GM12878 (cell line): ENCODE measurements at regions of chr2 and their contacts with region 1.

Region 1: GRCh38 chr2:171407030-171407675 is 26.6 kb downstream of the METTL8 start:
- DNase-seq: peak; percentile 71
- ATAC-seq: peak; percentile 75
- H3K4me3 ChIP-seq: 0 out of 2 replicates have a peak overlapping the region, but pooled peaks have one; percentile 14
- H3K27ac ChIP-seq: peak overlapping the region; percentile 93
- H3K4me1 ChIP-seq: peaks cover 64% of the 10 kb centered on the region
- H3K27me3 ChIP-seq: no peaks in the 10 kb centered on the region
- CTCF ChIP-seq: no peak
- EP300 ChIP-seq: peak; percentile 54 to 94; a peak in 3 of 4 replicates
- POLR2A ChIP-seq: no peak
- RAD21 ChIP-seq: 0 out of 2 replicates have a peak, but pooled peaks have one; percentile 14

Region 2: DNA sequence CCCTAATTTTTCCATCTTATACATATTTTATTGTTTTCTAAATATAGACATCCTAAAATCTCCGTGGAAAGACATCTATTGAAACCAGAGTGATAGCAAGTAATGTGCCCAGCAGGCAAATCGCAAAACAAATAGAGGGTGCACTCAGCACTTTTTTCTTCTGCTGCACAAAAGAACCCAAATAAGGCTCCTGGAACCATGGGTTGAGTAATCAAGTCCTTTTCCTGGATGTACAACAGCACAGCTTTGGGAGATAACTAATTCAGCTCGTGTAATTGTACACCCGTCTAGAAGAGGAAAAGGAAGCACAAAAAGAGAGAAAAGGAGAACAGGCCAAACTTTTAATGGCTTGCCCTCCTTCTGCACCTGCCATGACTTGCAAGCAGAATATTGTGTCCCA is 119.5 kb before region 1 on chr2:
- CTCF ChIA-PET with region 1: no interaction called
- POLR2A ChIA-PET with region 1: no interaction called
- RAD21 ChIA-PET with region 1: no interaction called
- SMC1A ChIA-PET with region 1: no interaction called
- in situ Hi-C with region 1: no loop called
- intact Hi-C with region 1: no loop called
- DNase-seq: no peak
- ATAC-seq: no peak
- H3K4me3 ChIP-seq: no peak overlapping the region
- H3K27ac ChIP-seq: no peak overlapping the region
- H3K4me1 ChIP-seq: no peaks in the 10 kb centered on the region
- H3K27me3 ChIP-seq: no peaks in the 10 kb centered on the region
- CTCF ChIP-seq: no peak
- EP300 ChIP-seq: no peak
- POLR2A ChIP-seq: no peak
- RAD21 ChIP-seq: no peak

Region 3: GRCh38 chr2:171325886-171326585 is 81.1 kb before region 1 on chr2:
- CTCF ChIA-PET with region 1: interaction called, 29 read pairs
- POLR2A ChIA-PET with region 1: interaction called, 168 read pairs
- RAD21 ChIA-PET with region 1: interaction called, 208 read pairs
- SMC1A ChIA-PET with region 1: interaction called, 273 read pairs
- in situ Hi-C with region 1: no loop called
- intact Hi-C with region 1: no loop called
- DNase-seq: no peak
- ATAC-seq: peak; percentile 71
- H3K4me3 ChIP-seq: peak overlapping the region; percentile 41; the same call in 1 of the 2 replicates
- H3K27ac ChIP-seq: peak overlapping the region; percentile 100
- H3K4me1 ChIP-seq: peaks cover 57% of the 10 kb centered on the region
- H3K27me3 ChIP-seq: no peaks in the 10 kb centered on the region
- CTCF ChIP-seq: no peak
- EP300 ChIP-seq: peak; percentile 61 to 62; a peak in 2 of 4 replicates
- POLR2A ChIP-seq: no peak
- RAD21 ChIP-seq: no peak

Region 4: DNA sequence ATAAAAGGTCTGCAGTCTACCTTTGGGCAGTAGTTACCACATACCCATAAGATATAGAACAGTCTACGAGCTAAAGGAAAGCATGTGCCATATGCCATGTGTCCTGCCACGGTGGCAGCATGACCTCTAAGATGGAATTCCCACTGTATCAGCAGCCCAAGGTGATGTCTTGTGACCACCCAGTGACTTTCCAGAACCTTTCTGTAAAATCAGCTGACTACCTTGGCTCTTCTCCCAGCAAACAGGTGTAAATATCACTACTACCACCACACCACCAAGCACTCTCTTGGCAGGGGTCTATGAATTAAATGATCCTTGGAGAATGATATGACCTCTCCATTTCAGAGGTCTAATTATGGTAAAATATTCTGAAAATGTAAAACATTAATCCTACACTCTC is 73.0 kb before region 1 on chr2:
- CTCF ChIA-PET with region 1: interaction called, 8 read pairs
- POLR2A ChIA-PET with region 1: interaction called, 7 read pairs
- RAD21 ChIA-PET with region 1: interaction called, 208 read pairs
- SMC1A ChIA-PET with region 1: interaction called, 273 read pairs
- in situ Hi-C with region 1: no loop called
- intact Hi-C with region 1: no loop called
- DNase-seq: no peak
- ATAC-seq: no peak
- H3K4me3 ChIP-seq: no peak overlapping the region
- H3K27ac ChIP-seq: peak overlapping the region; percentile 78
- H3K4me1 ChIP-seq: peaks cover 31% of the 10 kb centered on the region
- H3K27me3 ChIP-seq: no peaks in the 10 kb centered on the region
- CTCF ChIP-seq: no peak
- EP300 ChIP-seq: no peak
- POLR2A ChIP-seq: no peak
- RAD21 ChIP-seq: no peak

Region 5: GRCh38 chr2:171390941-171391516 is 16.1 kb before region 1 on chr2:
- CTCF ChIA-PET with region 1: interaction called, 13 read pairs
- POLR2A ChIA-PET with region 1: interaction called, 10 read pairs
- RAD21 ChIA-PET with region 1: interaction called, 21 read pairs
- SMC1A ChIA-PET with region 1: interaction called, 69 read pairs
- in situ Hi-C with region 1: no loop called
- intact Hi-C with region 1: loop called (anchors 2 kb)
- DNase-seq: no peak
- ATAC-seq: peak; percentile 83
- H3K4me3 ChIP-seq: no peak overlapping the region
- H3K27ac ChIP-seq: peak overlapping the region; percentile 64
- H3K4me1 ChIP-seq: peaks cover 48% of the 10 kb centered on the region
- H3K27me3 ChIP-seq: no peaks in the 10 kb centered on the region
- CTCF ChIP-seq: no peak
- EP300 ChIP-seq: peak; percentile 58 to 64; a peak in 2 of 4 replicates
- POLR2A ChIP-seq: no peak
- RAD21 ChIP-seq: no peak

Region 6: GRCh38 chr2:171433763-171434670 is 26.9 kb after region 1 on chr2 and contains the starts of genes DCAF17 and METTL8:
- CTCF ChIA-PET with region 1: interaction called, 3 read pairs
- POLR2A ChIA-PET with region 1: interaction called, 5 read pairs
- RAD21 ChIA-PET with region 1: interaction called, 10 read pairs
- SMC1A ChIA-PET with region 1: interaction called, 6 read pairs
- in situ Hi-C with region 1: no loop called
- intact Hi-C with region 1: no loop called
- DNase-seq: peak; percentile 94
- ATAC-seq: peak; percentile 94
- H3K4me3 ChIP-seq: peak within 1 kb of the TSS; percentile 81
- H3K27ac ChIP-seq: peak within 1 kb of the TSS; percentile 93
- H3K4me1 ChIP-seq: peaks cover 13% of the 10 kb centered on the region
- H3K27me3 ChIP-seq: no peaks in the 10 kb centered on the region
- CTCF ChIP-seq: peak; percentile 52 to 72 (median 61)
- EP300 ChIP-seq: no peak
- POLR2A ChIP-seq: peak; percentile 92
- RAD21 ChIP-seq: peak; percentile 33
- polyA plus RNA-seq, gene DCAF17: 5.2 to 5.6 TPM
- polyA plus RNA-seq, gene METTL8: 34.9 to 42.5 TPM